ENCODE measurements at regions of chr6 and their contacts with region 1.

Region 1: DNA sequence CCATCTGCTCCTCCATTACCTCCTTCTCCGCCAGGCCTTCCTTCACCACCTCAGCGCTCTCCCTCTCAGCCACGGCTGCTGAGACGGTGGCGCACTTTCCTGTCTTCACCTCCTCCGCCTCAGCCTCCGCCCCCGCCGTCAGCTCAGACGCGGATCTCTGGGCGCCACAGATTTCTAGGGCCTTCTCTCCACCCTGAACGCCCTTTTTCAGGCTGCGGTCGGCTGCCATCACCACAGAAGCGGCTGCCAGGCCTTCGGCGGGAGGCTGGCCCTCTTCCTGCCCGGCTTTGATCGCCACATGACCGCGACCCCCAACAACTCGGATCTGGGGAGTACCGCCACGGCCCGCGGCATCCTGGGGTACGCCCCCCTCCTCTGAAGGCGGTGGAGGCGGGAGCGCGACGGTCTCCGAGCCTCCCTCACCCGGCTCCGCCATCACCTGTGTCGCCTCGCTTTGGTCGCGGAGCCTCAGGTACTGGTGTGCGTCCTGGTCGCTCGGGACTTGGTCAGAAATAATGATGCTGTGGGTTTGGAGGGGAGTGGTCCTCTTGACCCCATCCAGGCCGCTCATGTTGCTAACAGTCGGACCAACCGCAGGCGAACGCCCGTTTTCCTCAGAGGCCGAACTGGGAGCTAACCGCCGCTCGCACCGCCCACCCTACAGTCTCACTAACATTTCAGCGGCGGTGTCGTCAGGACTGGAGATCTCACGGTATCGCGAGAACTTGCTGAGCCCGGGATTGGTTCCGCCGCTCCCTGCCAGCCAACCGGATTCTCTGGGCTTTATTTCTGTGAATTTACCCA is at the start of gene TSPYL1:
- DNase-seq: peak; percentile 97 to 98 (median 97)
- ATAC-seq: peak; percentile 97 to 98 (median 98)
- H3K4me3 ChIP-seq: peak within 1 kb of the TSS; percentile 73 to 97 (median 88)
- H3K27ac ChIP-seq: peak within 1 kb of the TSS; percentile 89 to 99 (median 97)
- H3K4me1 ChIP-seq: peaks cover 8 to 70% (median 55%) of the 10 kb centered on the region in 12 donors
- H3K27me3 ChIP-seq: no peaks in the 10 kb centered on the region
- CTCF ChIP-seq: peak in 1 of 12 donors; percentile 14
- POLR2A ChIP-seq: peak; percentile 91 to 99
- total RNA-seq, gene TSPYL1: 81.5 to 150 (median 103) TPM

Region 2: DNA sequence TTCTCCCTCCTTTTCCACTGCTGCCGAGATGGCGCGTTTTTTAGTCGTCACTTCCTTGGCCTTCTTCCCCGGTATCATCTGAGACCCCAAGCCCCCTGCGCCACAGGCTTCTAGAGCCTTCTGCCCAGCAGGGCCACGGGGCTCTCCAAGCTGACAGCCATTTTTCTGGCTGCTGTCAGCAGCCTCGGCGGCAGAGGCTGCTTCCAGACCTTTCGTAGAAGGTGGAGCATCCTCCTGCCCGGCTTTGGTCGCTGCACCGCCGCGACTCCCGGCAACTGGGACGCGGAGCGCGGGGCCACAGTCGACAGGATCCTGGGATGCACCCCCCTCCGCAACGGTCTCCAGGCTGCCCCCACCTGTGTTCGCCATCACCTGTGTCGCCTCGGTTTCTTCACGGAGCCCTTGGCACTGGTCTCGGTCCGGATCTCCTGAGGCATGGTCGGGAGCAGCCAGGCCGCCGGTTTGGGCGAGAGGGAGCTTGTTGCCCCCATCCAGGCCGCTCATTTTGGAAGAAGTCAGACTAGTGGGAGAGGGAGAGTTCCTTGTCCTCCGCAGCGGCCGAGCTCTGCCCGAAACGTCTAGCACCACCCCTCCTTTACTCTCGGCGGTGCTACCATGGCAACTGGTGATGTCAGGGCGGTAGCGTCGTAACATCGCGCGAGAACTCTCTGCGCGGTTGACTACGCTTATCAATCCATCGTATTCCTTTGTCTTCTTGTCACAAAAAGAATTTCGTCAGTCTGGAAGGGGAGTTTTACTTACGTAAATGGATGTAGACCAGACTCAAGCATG is 25.8 kb before region 1 on chr6 and contains the start of gene TSPYL4:
- intact Hi-C with region 1: loop called in 3 of 10 experiments (anchors 1 to 2 kb)
- DNase-seq: peak; percentile 94 to 97 (median 95)
- ATAC-seq: peak; percentile 97 to 98 (median 98)
- H3K4me3 ChIP-seq: peak within 1 kb of the TSS; percentile 61 to 98 (median 90)
- H3K27ac ChIP-seq: peak within 1 kb of the TSS; percentile 72 to 94 (median 88)
- H3K4me1 ChIP-seq: peaks cover 0 to 62% (median 49%) of the 10 kb centered on the region in 12 donors
- H3K27me3 ChIP-seq: no peaks in the 10 kb centered on the region
- CTCF ChIP-seq: no peak
- POLR2A ChIP-seq: peak in 1 of 2 donors; percentile 94
- total RNA-seq, gene TSPYL4: 26.0 to 34.1 (median 30.5) TPM

Region 3: GRCh38 chr6:116409756-116410155 is 130.3 kb after region 1 on chr6:
- intact Hi-C with region 1: loop called in 1 of 10 experiments (anchors 10 kb)
- DNase-seq: no peak
- ATAC-seq: peak in 2 of 4 donors; percentile 24 to 40
- H3K4me3 ChIP-seq: no peak overlapping the region
- H3K27ac ChIP-seq: peak overlapping the region in 5 of 12 donors; percentile 7 to 56 (median 25)
- H3K4me1 ChIP-seq: peaks cover 0 to 72% (median 32%) of the 10 kb centered on the region in 12 donors
- H3K27me3 ChIP-seq: no peaks in the 10 kb centered on the region
- CTCF ChIP-seq: no peak
- POLR2A ChIP-seq: no peak

Region 4: GRCh38 chr6:116450769-116451740 is 171.6 kb after region 1 on chr6:
- intact Hi-C with region 1: loop called in 3 of 10 experiments (anchors 10 kb)
- DNase-seq: no peak
- ATAC-seq: peak in 1 of 4 donors; percentile 61
- H3K4me3 ChIP-seq: no peak overlapping the region
- H3K27ac ChIP-seq: peak overlapping the region in 1 of 12 donors; percentile 28
- H3K4me1 ChIP-seq: peaks cover 0 to 59% (median 0%) of the 10 kb centered on the region in 12 donors
- H3K27me3 ChIP-seq: no peaks in the 10 kb centered on the region
- CTCF ChIP-seq: no peak
- POLR2A ChIP-seq: no peak

Region 5: DNA sequence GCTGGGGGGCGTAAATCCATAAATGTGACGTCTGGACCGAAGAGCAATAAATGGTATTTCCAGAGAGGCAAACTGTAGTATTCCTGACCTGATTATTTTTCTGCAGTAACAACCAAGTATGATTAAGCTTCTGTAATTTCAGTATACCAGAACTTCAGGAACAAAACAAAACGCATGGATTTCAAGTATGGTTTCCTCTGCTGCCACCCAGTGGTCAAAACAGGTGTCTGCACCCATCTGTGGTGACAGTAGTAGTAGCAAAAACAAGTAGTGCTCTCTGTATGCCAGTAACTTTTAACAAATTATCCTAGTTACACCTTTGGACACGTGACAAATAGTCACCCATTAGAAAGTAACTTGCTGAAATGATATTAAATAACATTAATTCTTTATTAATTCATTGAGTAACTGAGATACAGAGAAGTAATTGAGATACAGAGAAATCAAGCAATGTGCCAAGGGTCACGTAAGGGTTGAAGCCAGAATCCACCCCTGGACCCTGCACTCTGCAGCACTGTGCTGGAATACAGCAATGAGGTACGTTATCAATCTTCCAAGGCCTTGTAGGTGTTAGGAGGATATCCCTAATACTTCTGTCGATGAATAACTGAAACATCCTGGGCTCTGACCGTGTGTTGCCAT is 282.0 kb after region 1 on chr6:
- intact Hi-C with region 1: loop called in 6 of 10 experiments (anchors 5 to 10 kb)
- DNase-seq: peak; percentile 49 to 73 (median 64)
- ATAC-seq: peak in 3 of 4 donors; percentile 41 to 63 (median 43)
- H3K4me3 ChIP-seq: peak overlapping the region in 1 of 12 donors; percentile 32
- H3K27ac ChIP-seq: no peak overlapping the region
- H3K4me1 ChIP-seq: peaks cover 0 to 27% (median 7%) of the 10 kb centered on the region in 12 donors
- H3K27me3 ChIP-seq: no peaks in the 10 kb centered on the region
- CTCF ChIP-seq: peak; percentile 87 to 97 (median 95)
- POLR2A ChIP-seq: no peak